ENCODE measurements at regions of chr14 and their contacts with region 1.

Region 1: DNA sequence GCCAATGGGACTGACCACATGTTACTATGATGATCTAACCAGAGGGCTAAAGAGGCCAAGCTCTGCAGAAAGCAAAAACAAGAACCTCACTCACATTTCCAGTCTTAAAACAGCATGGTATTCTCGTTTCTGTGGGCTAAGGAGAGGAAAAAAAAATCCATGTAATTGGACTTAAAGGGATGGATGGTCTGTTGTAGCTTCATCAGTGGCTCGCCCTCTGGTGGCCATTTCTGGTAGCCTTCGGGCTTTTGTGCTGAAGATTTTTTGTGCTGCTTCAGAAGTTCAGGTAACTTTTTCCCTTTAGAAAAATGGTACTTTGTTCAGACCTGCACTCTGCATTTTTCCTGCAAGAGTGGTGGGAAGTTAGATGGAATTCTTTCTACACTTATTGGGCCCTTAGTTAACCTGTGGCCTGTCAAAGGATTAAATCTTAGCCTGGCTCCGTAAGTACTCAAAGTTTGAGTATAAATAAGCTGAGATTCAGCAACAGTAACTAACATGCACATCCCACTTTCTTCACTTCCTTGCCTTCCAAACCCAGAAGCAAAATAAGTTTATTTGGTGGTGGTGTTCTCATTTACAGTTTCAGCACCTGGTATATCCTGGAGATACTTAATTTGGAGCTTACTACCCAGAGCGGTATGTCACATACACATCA is 22.3 kb downstream of the DCAF4 start:
- H3K4me3 ChIP-seq: no peak overlapping the region
- H3K27ac ChIP-seq: no peak overlapping the region
- H3K4me1 ChIP-seq: no peaks in the 10 kb centered on the region
- CTCF ChIP-seq: peak; percentile 27; the same call in 1 of the 2 replicates

Region 2: GRCh38 chr14:72608391-72609204 is 340.0 kb before region 1 on chr14:
- CTCF ChIA-PET with region 1: no interaction called
- POLR2A ChIA-PET with region 1: no interaction called
- H3K4me3 ChIP-seq: no peak overlapping the region
- H3K27ac ChIP-seq: no peak overlapping the region
- H3K4me1 ChIP-seq: no peaks in the 10 kb centered on the region
- CTCF ChIP-seq: no peak

Region 3: DNA sequence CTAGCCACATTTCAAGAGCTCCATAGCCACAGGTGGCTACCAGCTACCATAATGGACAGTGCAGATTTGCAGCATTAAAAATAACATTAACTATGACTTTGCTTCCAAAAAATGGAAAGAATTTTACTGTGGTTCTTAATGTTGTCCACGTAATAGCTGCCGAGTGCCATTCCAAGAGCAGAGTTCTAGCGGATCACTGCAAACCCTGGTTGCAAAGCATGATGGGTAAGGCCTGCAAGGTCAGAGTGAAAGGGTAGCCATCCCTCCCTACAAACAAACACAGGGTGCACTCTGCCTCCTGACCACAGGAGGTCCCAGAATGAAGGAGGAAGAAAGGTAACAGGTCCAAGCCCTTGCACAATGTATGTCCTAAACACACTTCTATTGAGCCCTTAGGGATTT is 212.3 kb before region 1 on chr14:
- CTCF ChIA-PET with region 1: no interaction called
- POLR2A ChIA-PET with region 1: no interaction called
- H3K4me3 ChIP-seq: no peak overlapping the region
- H3K27ac ChIP-seq: no peak overlapping the region
- H3K4me1 ChIP-seq: no peaks in the 10 kb centered on the region
- CTCF ChIP-seq: no peak

Region 4: GRCh38 chr14:72962829-72963312 is 14.3 kb after region 1 on chr14:
- CTCF ChIA-PET with region 1: interaction called, 19 read pairs
- POLR2A ChIA-PET with region 1: interaction called, 3 read pairs
- H3K4me3 ChIP-seq: no peak overlapping the region
- H3K27ac ChIP-seq: no peak overlapping the region
- H3K4me1 ChIP-seq: no peaks in the 10 kb centered on the region; the same call in 1 of the 2 replicates
- CTCF ChIP-seq: no peak